H1 (cell line): ENCODE measurements at regions of chr10 and their contacts with region 1.

Region 1: GRCh38 chr10:70461215-70461986 is 17.2 kb upstream of the PALD1 start:
- DNase-seq: no peak
- H3K4me3 ChIP-seq: no peak overlapping the region
- H3K27ac ChIP-seq: no peak overlapping the region
- H3K4me1 ChIP-seq: peaks cover 3 to 27% (median 14%) of the 10 kb centered on the region in 4 experiments
- H3K27me3 ChIP-seq: peaks cover 21 to 42% (median 39%) of the 10 kb centered on the region in 4 experiments
- CTCF ChIP-seq: peak; percentile 95
- EP300 ChIP-seq: no peak
- POLR2A ChIP-seq: no peak
- RAD21 ChIP-seq: peak; percentile 98 to 100

Region 2: DNA sequence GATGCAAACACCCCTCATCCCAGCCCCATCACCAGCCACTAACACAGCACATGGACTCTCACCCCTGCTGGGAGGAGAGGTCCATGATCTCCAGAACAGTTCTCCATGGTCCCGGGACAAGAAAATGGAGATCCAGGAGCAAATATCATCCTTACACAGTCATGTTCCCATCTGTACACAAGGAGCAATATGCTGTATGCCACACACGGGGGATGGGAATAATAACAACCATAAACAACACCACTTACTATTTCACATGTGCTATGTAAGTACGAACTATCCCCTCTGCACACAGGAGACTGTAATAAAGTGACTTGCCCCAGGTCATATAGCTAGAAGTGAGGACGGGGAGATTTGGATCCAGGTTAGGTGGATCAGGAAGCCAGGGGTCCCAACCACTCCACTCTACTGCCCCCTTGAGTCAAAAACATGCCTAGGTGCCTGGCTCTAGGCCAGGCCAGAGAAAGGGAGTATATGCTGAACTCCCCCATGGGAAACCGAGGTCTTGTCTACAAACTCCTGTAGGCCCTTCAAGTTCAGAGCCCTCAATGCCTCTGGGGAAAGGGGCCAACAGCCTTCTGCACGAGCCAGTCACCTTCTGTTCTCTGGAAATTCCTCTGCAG is 113.1 kb before region 1 on chr10:
- CTCF ChIA-PET with region 1: no interaction called
- POLR2A ChIA-PET with region 1: no interaction called
- DNase-seq: peak in 1 of 2 experiments; percentile 73
- H3K4me3 ChIP-seq: no peak overlapping the region
- H3K27ac ChIP-seq: no peak overlapping the region
- H3K4me1 ChIP-seq: no peaks in the 10 kb centered on the region
- H3K27me3 ChIP-seq: no peaks in the 10 kb centered on the region
- CTCF ChIP-seq: peak; percentile 72 to 85 (median 78)
- EP300 ChIP-seq: no peak
- POLR2A ChIP-seq: no peak
- RAD21 ChIP-seq: peak; percentile 68 to 82

Region 3: GRCh38 chr10:70404036-70404786 is 57.2 kb before region 1 on chr10 and contains the start of gene EIF4EBP2:
- CTCF ChIA-PET with region 1: interaction called, 10 read pairs
- POLR2A ChIA-PET with region 1: interaction called, 3 read pairs
- DNase-seq: peak; percentile 93 to 100
- H3K4me3 ChIP-seq: peak within 1 kb of the TSS; percentile 75 to 89 (median 81)
- H3K27ac ChIP-seq: peak within 1 kb of the TSS; percentile 59
- H3K4me1 ChIP-seq: peaks cover 0 to 7% (median 5%) of the 10 kb centered on the region in 4 experiments; a peak in 6 of 7 replicates
- H3K27me3 ChIP-seq: no peaks in the 10 kb centered on the region
- CTCF ChIP-seq: no peak
- EP300 ChIP-seq: no peak
- POLR2A ChIP-seq: peak; percentile 80 to 91
- RAD21 ChIP-seq: no peak
- total RNA-seq, gene EIF4EBP2: 138 and 144 TPM in 2 replicates

Region 4: GRCh38 chr10:70440296-70441160 is 20.9 kb before region 1 on chr10:
- CTCF ChIA-PET with region 1: interaction called, 67 read pairs
- POLR2A ChIA-PET with region 1: interaction called, 28 read pairs
- DNase-seq: peak in 1 of 2 experiments; percentile 72
- H3K4me3 ChIP-seq: peak overlapping the region; percentile 23 to 57 (median 44)
- H3K27ac ChIP-seq: no peak overlapping the region
- H3K4me1 ChIP-seq: peaks cover 5 to 20% (median 19%) of the 10 kb centered on the region in 4 experiments
- H3K27me3 ChIP-seq: peaks cover 18 to 43% (median 38%) of the 10 kb centered on the region in 4 experiments
- CTCF ChIP-seq: no peak
- EP300 ChIP-seq: no peak
- POLR2A ChIP-seq: no peak
- RAD21 ChIP-seq: no peak

Region 5: DNA sequence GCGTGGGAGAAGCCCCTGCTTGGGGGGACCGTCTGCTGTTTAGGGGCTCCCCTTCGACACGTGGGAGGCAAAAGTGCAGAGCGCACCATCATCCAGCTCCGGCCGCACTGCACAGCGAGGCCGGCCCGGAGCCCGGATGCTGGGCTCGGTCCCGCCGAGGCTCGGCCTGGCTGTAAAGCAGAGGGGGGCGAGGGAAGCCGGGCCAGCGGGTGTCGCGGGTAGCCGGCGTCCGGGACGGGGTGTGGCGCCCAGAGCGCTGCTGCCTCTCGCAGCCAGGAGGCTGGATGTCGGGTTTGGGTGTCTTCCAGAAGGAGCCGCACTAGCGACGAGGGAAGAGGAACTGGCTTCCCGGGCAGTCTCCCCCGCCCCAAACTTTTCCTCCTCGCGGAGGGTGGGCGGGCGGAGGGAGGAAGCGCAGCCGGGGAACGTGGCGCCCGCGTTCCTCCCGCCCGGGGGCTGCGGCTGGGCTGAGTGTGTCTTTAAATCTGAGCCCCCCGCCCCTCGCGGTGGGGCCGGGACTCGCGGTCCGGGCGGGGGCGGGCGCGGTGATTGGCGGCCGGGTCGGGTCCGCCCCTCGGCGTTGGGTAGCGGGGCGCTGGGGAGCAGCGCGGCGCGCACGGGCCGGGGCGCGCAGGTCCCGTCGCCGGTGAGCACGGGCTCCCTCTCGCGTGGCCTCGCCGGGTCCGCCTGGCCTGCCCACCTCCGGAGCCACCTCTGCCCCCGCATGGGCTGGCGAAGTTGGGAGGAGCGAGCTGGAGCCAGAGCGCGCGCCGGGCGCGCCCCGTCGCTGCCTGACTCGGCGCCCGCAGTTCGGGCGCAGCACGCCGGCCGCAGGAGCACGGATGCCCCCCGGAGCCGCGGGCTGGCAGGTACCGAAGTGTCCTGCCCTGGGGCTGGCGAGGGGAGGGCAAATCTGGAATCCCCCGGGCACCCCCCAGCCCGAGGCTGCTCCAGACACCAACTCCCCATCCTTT is 17.1 kb after region 1 on chr10 and contains the start of gene PALD1:
- CTCF ChIA-PET with region 1: interaction called, 33 read pairs
- POLR2A ChIA-PET with region 1: interaction called, 6 read pairs
- DNase-seq: peak in 1 of 2 experiments; percentile 89
- H3K4me3 ChIP-seq: peak within 1 kb of the TSS; percentile 64 to 84 (median 70)
- H3K27ac ChIP-seq: peak within 1 kb of the TSS; percentile 22; the same call in 1 of the 2 replicates
- H3K4me1 ChIP-seq: peaks cover 9 to 22% (median 18%) of the 10 kb centered on the region in 4 experiments
- H3K27me3 ChIP-seq: peaks cover 0 to 6% (median 2%) of the 10 kb centered on the region in 4 experiments; a peak in 3 of 7 replicates
- CTCF ChIP-seq: peak; percentile 1 to 16 (median 13); a peak in 3 of 4 replicates
- EP300 ChIP-seq: no peak
- POLR2A ChIP-seq: no peak; a peak in 2 of 3 replicates
- RAD21 ChIP-seq: 0 out of 4 replicates have a peak, but pooled peaks have one; percentile 2 to 20
- total RNA-seq, gene PALD1: 31.8 and 32.8 TPM in 2 replicates

Region 6: GRCh38 chr10:70500812-70501301 is 39.5 kb after region 1 on chr10:
- CTCF ChIA-PET with region 1: interaction called, 13 read pairs
- POLR2A ChIA-PET with region 1: interaction called, 3 read pairs
- DNase-seq: no peak
- H3K4me3 ChIP-seq: no peak overlapping the region
- H3K27ac ChIP-seq: peak overlapping the region; percentile 30; the same call in 1 of the 2 replicates
- H3K4me1 ChIP-seq: peaks cover 0 to 11% (median 3%) of the 10 kb centered on the region in 4 experiments; a peak in 5 of 7 replicates
- H3K27me3 ChIP-seq: no peaks in the 10 kb centered on the region
- CTCF ChIP-seq: no peak
- EP300 ChIP-seq: no peak
- POLR2A ChIP-seq: no peak
- RAD21 ChIP-seq: no peak

Region 7: GRCh38 chr10:70518695-70519094 is 57.3 kb after region 1 on chr10:
- CTCF ChIA-PET with region 1: interaction called, 22 read pairs
- POLR2A ChIA-PET with region 1: no interaction called
- DNase-seq: no peak
- H3K4me3 ChIP-seq: no peak overlapping the region
- H3K27ac ChIP-seq: no peak overlapping the region
- H3K4me1 ChIP-seq: peaks cover 0 to 4% (median 3%) of the 10 kb centered on the region in 4 experiments; a peak in 6 of 7 replicates
- H3K27me3 ChIP-seq: no peaks in the 10 kb centered on the region; a peak in 1 of 7 replicates
- CTCF ChIP-seq: no peak
- EP300 ChIP-seq: no peak
- POLR2A ChIP-seq: no peak
- RAD21 ChIP-seq: no peak

Region 8: DNA sequence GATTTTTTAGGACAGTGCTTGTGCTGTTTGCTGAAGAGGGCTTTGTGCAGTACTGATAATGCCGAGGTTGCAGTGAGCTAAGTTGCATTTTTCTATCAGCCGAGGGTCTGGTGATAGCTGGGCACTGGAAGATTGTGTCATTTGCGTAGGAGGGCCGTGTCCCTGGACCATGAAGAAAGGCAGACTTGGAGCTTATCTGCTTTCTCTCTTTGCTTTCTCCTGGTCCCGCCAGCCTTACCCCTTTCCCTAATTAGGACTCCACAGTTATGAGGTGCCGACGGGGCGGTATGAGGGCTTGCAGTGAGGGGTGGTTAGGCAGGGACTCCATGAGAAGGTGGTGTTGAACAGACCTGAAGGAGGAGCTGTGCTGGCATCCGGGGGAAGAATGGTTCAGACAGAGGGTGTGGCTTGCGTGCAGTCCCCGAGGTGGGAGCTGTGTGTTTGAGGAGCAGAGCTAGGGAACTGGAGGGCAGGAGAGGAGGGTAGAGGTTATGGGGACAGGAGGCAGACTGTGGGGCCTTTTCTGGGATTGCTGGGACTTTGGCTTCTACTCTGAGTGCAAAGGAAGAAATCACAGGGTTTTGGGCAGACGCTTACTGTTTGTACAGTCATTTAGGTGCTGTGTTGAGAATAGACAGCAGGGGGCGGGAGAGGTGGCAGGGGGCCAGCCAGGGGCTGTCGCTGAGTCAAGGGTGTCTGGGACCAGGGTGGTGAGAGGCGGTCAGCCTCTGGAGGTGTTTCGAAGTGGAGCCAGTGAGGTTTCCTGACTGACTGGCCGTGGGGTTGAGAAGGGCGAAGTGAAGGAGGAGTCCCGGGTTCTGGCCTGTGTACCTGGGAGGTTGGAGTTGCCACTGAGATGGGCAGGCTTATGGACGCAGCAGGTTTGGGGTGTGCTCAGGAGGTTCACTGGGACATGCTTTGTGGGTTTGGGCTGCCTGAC is 97.7 kb after region 1 on chr10:
- CTCF ChIA-PET with region 1: interaction called, 10 read pairs
- POLR2A ChIA-PET with region 1: no interaction called
- DNase-seq: peak in 1 of 2 experiments; percentile 80
- H3K4me3 ChIP-seq: no peak overlapping the region
- H3K27ac ChIP-seq: no peak overlapping the region
- H3K4me1 ChIP-seq: peaks cover 0 to 6% (median 3%) of the 10 kb centered on the region in 4 experiments; a peak in 4 of 7 replicates
- H3K27me3 ChIP-seq: no peaks in the 10 kb centered on the region
- CTCF ChIP-seq: peak in 2 of 3 experiments; percentile 44 to 62; a peak in 3 of 4 replicates
- EP300 ChIP-seq: no peak
- POLR2A ChIP-seq: no peak
- RAD21 ChIP-seq: peak; percentile 37 to 63; a peak in 3 of 4 replicates